Activated B cell treated with CpG ODN at 0.5 μM for 24 hours (primary cell): ENCODE measurements at regions of chr3 and their contacts with region 1.

Region 1: DNA sequence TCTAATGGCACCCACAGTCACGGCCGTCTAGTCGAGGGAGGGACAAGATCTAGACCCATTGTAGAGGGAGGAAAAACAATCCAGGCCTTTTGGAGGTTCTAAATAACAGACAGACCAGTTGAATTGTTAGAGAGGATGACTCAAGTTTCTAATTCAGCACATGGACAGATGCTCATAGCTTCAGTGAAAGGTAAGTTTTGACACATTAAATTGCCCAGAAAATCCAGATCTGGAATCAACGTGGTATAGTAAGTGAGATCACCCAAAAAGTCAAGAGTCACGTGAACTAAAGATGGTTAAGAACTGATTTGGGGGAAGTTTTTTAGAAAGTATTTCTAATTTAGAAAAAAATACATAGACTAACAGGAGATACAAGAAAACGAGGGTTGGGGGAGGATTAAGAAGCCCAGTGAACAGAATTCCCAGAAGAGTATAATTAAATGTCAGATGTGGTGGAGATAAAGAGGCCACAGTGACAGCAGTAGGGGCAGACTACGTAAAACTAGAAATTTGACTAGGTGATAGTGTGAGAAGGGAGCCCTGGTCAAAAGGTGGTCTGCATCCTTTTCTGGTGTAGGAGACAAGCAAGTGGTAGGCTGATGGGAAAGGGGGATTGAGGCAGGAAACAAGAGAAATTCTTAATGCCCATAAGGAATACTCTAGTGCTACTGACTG is 47.1 kb downstream of the CAPN7 start:
- DNase-seq: no peak
- ATAC-seq: no peak
- H3K4me3 Mint-ChIP-seq: no peak overlapping the region
- H3K27ac Mint-ChIP-seq: peak overlapping the region; percentile 46
- H3K4me1 Mint-ChIP-seq: no peaks in the 10 kb centered on the region
- H3K27me3 Mint-ChIP-seq: no peaks in the 10 kb centered on the region
- CTCF ChIP-seq: no peak

Region 2: GRCh38 chr3:15215996-15216395 is 37.2 kb before region 1 on chr3:
- CTCF ChIA-PET with region 1: no interaction called
- POLR2A ChIA-PET with region 1: no interaction called
- intact Hi-C with region 1: loop called (anchors 5 kb)
- DNase-seq: no peak
- ATAC-seq: no peak
- H3K4me3 Mint-ChIP-seq: no peak overlapping the region
- H3K27ac Mint-ChIP-seq: no peak overlapping the region
- H3K4me1 Mint-ChIP-seq: peaks cover 25% of the 10 kb centered on the region
- H3K27me3 Mint-ChIP-seq: no peaks in the 10 kb centered on the region
- CTCF ChIP-seq: no peak

Region 3: GRCh38 chr3:15903164-15903563 is 650.0 kb after region 1 on chr3:
- CTCF ChIA-PET with region 1: no interaction called
- POLR2A ChIA-PET with region 1: no interaction called
- intact Hi-C with region 1: no loop called
- DNase-seq: no peak
- ATAC-seq: no peak
- H3K4me3 Mint-ChIP-seq: no peak overlapping the region
- H3K27ac Mint-ChIP-seq: no peak overlapping the region
- H3K4me1 Mint-ChIP-seq: no peaks in the 10 kb centered on the region
- H3K27me3 Mint-ChIP-seq: no peaks in the 10 kb centered on the region
- CTCF ChIP-seq: no peak